ENCODE measurements at regions of chr3 and their contacts with region 1.

Region 1: GRCh38 chr3:98039322-98040024 is 4.4 kb upstream of the GABRR3 start:
- DNase-seq: peak; percentile 88
- ATAC-seq: peak; percentile 97
- H3K4me3 Mint-ChIP-seq: peak overlapping the region; percentile 84
- H3K27ac Mint-ChIP-seq: peak overlapping the region; percentile 96
- H3K4me1 Mint-ChIP-seq: peaks cover 27% of the 10 kb centered on the region
- H3K27me3 Mint-ChIP-seq: peaks cover 25% of the 10 kb centered on the region

Region 2: DNA sequence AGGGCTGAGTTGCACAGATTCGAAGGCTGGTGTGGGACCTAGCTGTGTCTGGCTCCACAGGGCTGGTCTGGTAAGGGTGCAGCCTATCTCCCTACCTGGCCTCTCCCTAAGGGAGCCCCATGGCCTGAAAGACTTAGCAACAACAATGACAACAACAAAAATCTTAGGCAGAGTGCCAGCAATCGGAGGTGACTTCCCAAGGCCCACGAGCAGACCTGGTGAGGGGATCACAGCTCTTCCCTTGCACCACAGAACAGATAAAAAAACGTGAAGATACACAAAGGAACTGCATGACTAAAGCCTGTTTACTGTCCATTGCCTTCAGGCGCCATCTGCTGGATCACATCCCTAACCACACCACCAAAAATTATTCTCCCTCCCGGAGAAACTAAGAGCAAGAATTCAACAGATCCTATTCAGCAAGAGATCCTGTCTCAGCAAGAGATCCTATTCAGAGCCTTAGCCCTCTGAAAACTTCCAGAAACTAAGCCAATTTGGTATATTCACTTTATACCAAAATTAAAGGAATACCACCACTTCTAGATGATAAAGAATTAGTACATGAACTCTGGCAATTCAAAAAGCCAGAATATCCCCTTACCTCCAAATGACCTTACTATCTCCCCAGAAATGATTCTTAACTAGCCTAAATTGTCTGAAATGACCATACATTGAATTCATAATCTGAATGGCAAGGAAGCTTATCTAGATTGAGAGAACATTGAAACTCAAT is 290.1 kb after region 1 on chr3:
- CTCF ChIA-PET with region 1: interaction called, 53 read pairs
- DNase-seq: peak; percentile 71
- ATAC-seq: peak; percentile 74
- H3K4me3 Mint-ChIP-seq: no peak overlapping the region
- H3K27ac Mint-ChIP-seq: no peak overlapping the region
- H3K4me1 Mint-ChIP-seq: peaks cover 46% of the 10 kb centered on the region
- H3K27me3 Mint-ChIP-seq: peaks cover 8% of the 10 kb centered on the region

Region 3: GRCh38 chr3:98593046-98593936 is 553.8 kb after region 1 on chr3 and contains the start of gene CPOX:
- CTCF ChIA-PET with region 1: interaction called, 13 read pairs
- DNase-seq: peak; percentile 94
- ATAC-seq: peak; percentile 98
- H3K4me3 Mint-ChIP-seq: peak within 1 kb of the TSS; percentile 99
- H3K27ac Mint-ChIP-seq: peak within 1 kb of the TSS; percentile 99
- H3K4me1 Mint-ChIP-seq: peaks cover 46% of the 10 kb centered on the region
- H3K27me3 Mint-ChIP-seq: no peaks in the 10 kb centered on the region
- total RNA-seq, gene CPOX: 71.6 to 88.5 TPM

Region 4: GRCh38 chr3:98602078-98602678 is 562.7 kb after region 1 on chr3:
- CTCF ChIA-PET with region 1: interaction called, 13 read pairs
- DNase-seq: no peak
- ATAC-seq: peak; percentile 76
- H3K4me3 Mint-ChIP-seq: no peak overlapping the region
- H3K27ac Mint-ChIP-seq: no peak overlapping the region
- H3K4me1 Mint-ChIP-seq: peaks cover 2% of the 10 kb centered on the region
- H3K27me3 Mint-ChIP-seq: peaks cover 13% of the 10 kb centered on the region